Heart left ventricle (tissue), 16 donors: ENCODE measurements at regions of chr11 and their contacts with region 1.

Region 1: GRCh38 chr11:695538-696248 is at the start of gene TMEM80:
- DNase-seq: peak; percentile 99 to 100 (median 100)
- ATAC-seq: peak; percentile 87 to 93 (median 90)
- H3K4me3 ChIP-seq: peak within 1 kb of the TSS; percentile 61 to 99 (median 94)
- H3K27ac ChIP-seq: peak within 1 kb of the TSS; percentile 98 to 100 (median 100)
- H3K4me1 ChIP-seq: peaks cover 8 to 45% (median 32%) of the 10 kb centered on the region in 12 donors
- H3K27me3 ChIP-seq: no peaks in the 10 kb centered on the region
- CTCF ChIP-seq: no peak
- POLR2A ChIP-seq: peak in 1 of 2 donors; percentile 76
- total RNA-seq, gene TMEM80: 8.9 to 18.2 (median 15.0) TPM

Region 2: GRCh38 chr11:469684-470560 is 225.8 kb before region 1 on chr11:
- intact Hi-C with region 1: no loop called
- DNase-seq: peak in 3 of 5 donors; percentile 66 to 71 (median 69)
- ATAC-seq: peak; percentile 51 to 89 (median 67)
- H3K4me3 ChIP-seq: peak overlapping the region in 10 of 12 donors; percentile 19 to 47 (median 30)
- H3K27ac ChIP-seq: peak overlapping the region; percentile 61 to 90 (median 80)
- H3K4me1 ChIP-seq: peaks cover 7 to 27% (median 18%) of the 10 kb centered on the region in 12 donors
- H3K27me3 ChIP-seq: no peaks in the 10 kb centered on the region
- CTCF ChIP-seq: peak in 6 of 12 donors; percentile 8 to 42 (median 24)
- POLR2A ChIP-seq: no peak

Region 3: GRCh38 chr11:568306-569157 is 127.2 kb before region 1 on chr11:
- intact Hi-C with region 1: loop called in 1 of 10 experiments (anchors 5 kb)
- DNase-seq: peak; percentile 93 to 97 (median 95)
- ATAC-seq: peak; percentile 89 to 94 (median 92)
- H3K4me3 ChIP-seq: peak overlapping the region; percentile 64 to 90 (median 76)
- H3K27ac ChIP-seq: peak overlapping the region; percentile 87 to 100 (median 98)
- H3K4me1 ChIP-seq: peaks cover 0 to 31% (median 16%) of the 10 kb centered on the region in 12 donors
- H3K27me3 ChIP-seq: no peaks in the 10 kb centered on the region
- CTCF ChIP-seq: no peak
- POLR2A ChIP-seq: peak; percentile 58 to 65

Region 4: DNA sequence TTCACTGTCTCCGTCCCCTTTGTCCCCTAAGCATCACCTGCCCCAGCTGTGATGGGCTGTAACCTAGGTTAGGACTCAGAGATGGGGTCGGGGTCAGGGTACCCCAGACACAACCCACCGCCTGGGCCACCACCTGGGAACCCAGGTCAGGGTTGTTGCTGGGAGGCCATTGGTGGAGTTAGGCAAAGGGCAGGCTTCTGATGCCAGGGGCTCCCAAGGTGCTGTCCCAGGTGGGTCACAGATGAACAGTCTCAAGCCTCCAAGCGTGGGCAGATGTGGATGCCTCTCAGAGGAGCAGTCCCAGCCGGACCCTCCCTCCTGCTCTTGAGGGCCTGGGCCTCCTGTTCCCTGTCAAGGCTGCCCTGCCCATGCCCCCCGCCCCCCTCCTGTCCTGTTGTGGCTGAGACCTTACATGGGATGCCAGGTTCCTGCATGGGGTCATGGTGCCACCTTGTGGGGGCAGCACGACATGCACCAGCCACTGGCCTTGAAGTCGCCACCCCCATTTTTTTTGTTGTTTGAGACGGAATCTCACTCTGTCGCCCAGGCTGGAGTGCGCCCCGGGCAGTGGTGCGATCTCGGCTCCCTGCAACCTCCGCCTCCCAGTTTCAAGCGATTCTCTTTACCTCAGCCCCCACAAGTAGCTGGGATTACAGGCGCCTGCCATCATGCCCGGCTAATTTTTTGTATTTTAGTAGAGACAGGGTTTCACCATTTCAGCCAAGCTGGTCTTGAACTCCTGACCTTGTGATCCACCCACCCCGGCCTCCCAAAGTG is 69.5 kb after region 1 on chr11:
- intact Hi-C with region 1: no loop called
- DNase-seq: peak in 2 of 5 donors; percentile 62 to 69
- ATAC-seq: peak in 3 of 4 donors; percentile 57 to 74 (median 69)
- H3K4me3 ChIP-seq: no peak overlapping the region
- H3K27ac ChIP-seq: no peak overlapping the region
- H3K4me1 ChIP-seq: no peaks in the 10 kb centered on the region
- H3K27me3 ChIP-seq: no peaks in the 10 kb centered on the region
- CTCF ChIP-seq: peak; percentile 41 to 60 (median 48)
- POLR2A ChIP-seq: no peak